ENCODE measurements at regions of chr11 and their contacts with region 1.

Region 1: DNA sequence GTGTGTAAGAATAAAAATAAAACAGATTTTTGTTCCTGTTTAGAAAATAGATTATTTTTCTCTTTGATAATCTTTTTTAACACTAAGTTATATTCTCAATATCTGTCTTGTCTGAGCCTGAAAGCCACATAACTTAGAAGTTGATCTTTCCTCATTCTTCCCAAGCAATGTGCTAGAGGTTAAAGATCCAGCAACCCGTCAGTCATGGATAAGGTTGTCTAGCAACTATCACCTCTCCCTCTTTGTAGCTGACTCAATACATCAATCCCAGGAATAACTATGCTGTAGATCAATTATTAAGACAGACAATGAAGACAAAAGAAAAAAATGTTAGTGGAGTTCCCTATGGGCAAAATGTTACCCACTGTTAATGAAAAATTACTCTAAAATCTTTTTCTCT is 813.1 kb upstream of the CCDC179 start:
- DNase-seq: no peak
- ATAC-seq: no peak
- H3K4me3 ChIP-seq: no peak overlapping the region
- H3K27ac ChIP-seq: no peak overlapping the region
- H3K4me1 ChIP-seq: no peaks in the 10 kb centered on the region
- H3K27me3 ChIP-seq: no peaks in the 10 kb centered on the region
- CTCF ChIP-seq: no peak

Region 2: DNA sequence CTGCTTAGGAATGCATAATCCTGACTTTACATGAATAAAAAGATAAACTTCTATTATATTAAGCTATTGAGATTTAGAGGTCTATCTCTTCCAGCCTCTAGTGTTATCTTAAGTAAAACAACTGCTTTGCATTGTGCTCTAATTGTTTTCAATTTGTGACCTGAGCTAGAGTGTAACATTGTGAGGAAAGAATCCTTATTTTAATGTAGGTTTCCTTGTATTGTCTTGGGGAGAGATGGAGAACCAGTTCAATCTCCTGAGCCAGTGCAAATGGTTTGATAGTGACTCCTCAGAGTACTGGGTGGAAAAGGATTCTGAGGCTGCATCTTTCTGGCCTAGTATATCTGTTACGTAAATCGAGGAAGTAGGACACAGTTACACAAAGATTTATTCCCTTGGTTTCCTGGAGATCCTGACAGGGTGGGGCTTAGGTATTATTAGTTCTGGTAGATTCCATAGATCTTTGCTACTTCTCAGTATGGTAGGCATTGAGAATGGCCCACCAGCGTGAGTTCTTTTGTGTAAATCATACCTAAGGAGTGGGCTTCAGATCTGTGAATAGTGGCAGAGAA is 129.6 kb before region 1 on chr11:
- intact Hi-C with region 1: no loop called
- DNase-seq: no peak
- ATAC-seq: no peak
- H3K4me3 ChIP-seq: no peak overlapping the region
- H3K27ac ChIP-seq: no peak overlapping the region
- H3K4me1 ChIP-seq: peaks cover 0 to 4% (median 0%) of the 10 kb centered on the region in 9 donors
- H3K27me3 ChIP-seq: no peaks in the 10 kb centered on the region
- CTCF ChIP-seq: no peak

Region 3: DNA sequence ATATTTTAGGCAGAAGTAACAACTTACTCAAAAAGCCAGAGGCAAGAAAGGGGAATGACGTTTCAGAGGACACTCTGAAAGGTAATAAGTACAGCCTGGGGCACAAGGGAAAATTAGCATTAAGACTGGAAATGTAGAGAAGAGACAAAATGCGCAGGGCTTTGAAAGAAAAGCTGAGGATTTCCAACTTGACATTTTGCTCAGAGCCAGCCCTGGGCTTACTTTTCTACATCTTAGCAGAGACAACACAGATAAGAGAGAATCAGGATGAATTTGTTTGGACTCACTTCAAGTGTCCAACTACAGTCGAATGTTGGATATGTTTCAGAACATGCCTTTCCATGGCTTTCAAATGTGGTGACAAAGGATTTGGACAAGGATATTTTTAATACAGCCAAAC is 14.6 kb after region 1 on chr11:
- intact Hi-C with region 1: loop called in 1 of 10 experiments (anchors 2 kb)
- DNase-seq: no peak
- ATAC-seq: no peak
- H3K4me3 ChIP-seq: no peak overlapping the region
- H3K27ac ChIP-seq: no peak overlapping the region
- H3K4me1 ChIP-seq: no peaks in the 10 kb centered on the region
- H3K27me3 ChIP-seq: no peaks in the 10 kb centered on the region
- CTCF ChIP-seq: no peak

Region 4: DNA sequence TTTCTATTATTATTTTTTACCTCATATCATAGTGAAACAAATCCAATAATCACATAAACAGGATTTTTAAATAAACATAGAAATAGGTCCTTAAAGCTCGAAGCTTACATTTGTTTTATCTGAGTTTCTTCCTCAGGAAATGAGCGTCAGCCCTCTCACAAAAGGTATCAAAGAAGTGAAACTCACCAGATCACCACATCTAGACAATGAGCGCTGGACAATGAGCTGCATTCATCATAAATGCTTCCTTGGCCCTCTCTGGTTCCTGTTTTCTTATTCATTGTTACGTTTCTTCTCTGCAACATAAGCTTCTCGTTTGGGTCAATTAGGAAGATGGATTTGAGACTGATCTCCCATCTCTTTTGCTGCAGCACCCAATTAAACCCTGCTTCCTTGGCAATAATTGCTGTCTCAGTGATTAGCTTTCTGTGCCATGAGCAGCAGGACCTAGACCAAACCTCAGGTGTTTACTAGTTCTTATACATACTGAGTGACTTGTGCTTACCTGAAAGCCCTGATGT is 173.6 kb after region 1 on chr11:
- intact Hi-C with region 1: no loop called
- DNase-seq: no peak
- ATAC-seq: no peak
- H3K4me3 ChIP-seq: no peak overlapping the region
- H3K27ac ChIP-seq: no peak overlapping the region
- H3K4me1 ChIP-seq: no peaks in the 10 kb centered on the region
- H3K27me3 ChIP-seq: no peaks in the 10 kb centered on the region
- CTCF ChIP-seq: no peak